CD4-positive, alpha-beta memory T cell (primary cell): ENCODE measurements at regions of chr21 and their contacts with region 1.

Region 1: DNA sequence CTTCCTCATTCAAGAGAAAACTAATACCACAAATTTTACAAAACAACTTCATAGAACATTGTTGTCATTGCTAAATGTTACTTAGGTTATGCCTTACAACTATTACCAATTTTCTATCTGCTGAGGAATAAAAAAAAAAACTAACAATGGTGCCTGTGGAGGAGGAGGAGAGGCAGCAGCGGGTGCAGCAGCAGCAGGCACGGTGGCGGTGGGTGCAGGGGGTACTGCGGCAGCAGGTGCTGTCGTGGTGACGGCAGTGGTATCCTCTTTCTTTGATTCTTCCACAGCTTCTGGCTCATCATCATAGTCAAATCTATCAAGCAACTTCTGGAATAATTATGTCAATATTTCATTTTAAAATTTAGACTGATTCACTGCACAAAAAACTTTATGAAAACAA is 35.5 kb downstream of the SCAF4 start:
- DNase-seq: no peak
- H3K4me3 ChIP-seq: no peak overlapping the region
- H3K4me3 Mint-ChIP-seq: no peak overlapping the region
- H3K27ac ChIP-seq: no peak overlapping the region
- H3K27ac Mint-ChIP-seq: no peak overlapping the region
- H3K4me1 ChIP-seq: no peaks in the 10 kb centered on the region
- H3K4me1 Mint-ChIP-seq: peaks cover 0 to 4% (median under 1%) of the 10 kb centered on the region in 4 donors
- H3K27me3 ChIP-seq: no peaks in the 10 kb centered on the region
- H3K27me3 Mint-ChIP-seq: no peaks in the 10 kb centered on the region

Region 2: GRCh38 chr21:31218830-31219608 is 477.4 kb before region 1 on chr21:
- CTCF ChIA-PET with region 1: no interaction called
- POLR2A ChIA-PET with region 1: no interaction called
- intact Hi-C with region 1: no loop called
- DNase-seq: no peak
- H3K4me3 ChIP-seq: no peak overlapping the region
- H3K4me3 Mint-ChIP-seq: peak overlapping the region in 1 of 8 donors; percentile 39
- H3K27ac ChIP-seq: no peak overlapping the region
- H3K27ac Mint-ChIP-seq: peak overlapping the region in 2 of 7 donors; percentile 16 to 74
- H3K4me1 ChIP-seq: no peaks in the 10 kb centered on the region
- H3K4me1 Mint-ChIP-seq: peaks cover 1 to 6% (median 3%) of the 10 kb centered on the region in 4 donors
- H3K27me3 ChIP-seq: no peaks in the 10 kb centered on the region
- H3K27me3 Mint-ChIP-seq: no peaks in the 10 kb centered on the region

Region 3: GRCh38 chr21:31708541-31708940 is 12.1 kb after region 1 on chr21:
- CTCF ChIA-PET with region 1: no interaction called
- POLR2A ChIA-PET with region 1: no interaction called
- intact Hi-C with region 1: loop called (anchors 2 kb)
- DNase-seq: no peak
- H3K4me3 ChIP-seq: no peak overlapping the region
- H3K4me3 Mint-ChIP-seq: no peak overlapping the region
- H3K27ac ChIP-seq: no peak overlapping the region
- H3K27ac Mint-ChIP-seq: peak overlapping the region in 2 of 7 donors; percentile 47 to 51
- H3K4me1 ChIP-seq: peaks cover 66% of the 10 kb centered on the region
- H3K4me1 Mint-ChIP-seq: peaks cover 53 to 72% (median 61%) of the 10 kb centered on the region in 4 donors
- H3K27me3 ChIP-seq: no peaks in the 10 kb centered on the region
- H3K27me3 Mint-ChIP-seq: no peaks in the 10 kb centered on the region